Psoas muscle (tissue), 8 donors: ENCODE measurements at regions of chr20 and their contacts with region 1.

Region 1: GRCh38 chr20:37790900-37791299 is 97.1 kb downstream of the CTNNBL1 start:
- DNase-seq: no peak
- ATAC-seq: no peak
- H3K4me3 ChIP-seq: no peak overlapping the region
- H3K27ac ChIP-seq: no peak overlapping the region
- H3K4me1 ChIP-seq: no peaks in the 10 kb centered on the region
- H3K27me3 ChIP-seq: no peaks in the 10 kb centered on the region
- CTCF ChIP-seq: no peak

Region 2: GRCh38 chr20:37575884-37576283 is 215.0 kb before region 1 on chr20:
- intact Hi-C with region 1: no loop called
- DNase-seq: no peak
- ATAC-seq: no peak
- H3K4me3 ChIP-seq: no peak overlapping the region
- H3K27ac ChIP-seq: no peak overlapping the region
- H3K4me1 ChIP-seq: no peaks in the 10 kb centered on the region
- H3K27me3 ChIP-seq: peaks cover 0 to 12% (median 0%) of the 10 kb centered on the region in 3 donors
- CTCF ChIP-seq: no peak

Region 3: DNA sequence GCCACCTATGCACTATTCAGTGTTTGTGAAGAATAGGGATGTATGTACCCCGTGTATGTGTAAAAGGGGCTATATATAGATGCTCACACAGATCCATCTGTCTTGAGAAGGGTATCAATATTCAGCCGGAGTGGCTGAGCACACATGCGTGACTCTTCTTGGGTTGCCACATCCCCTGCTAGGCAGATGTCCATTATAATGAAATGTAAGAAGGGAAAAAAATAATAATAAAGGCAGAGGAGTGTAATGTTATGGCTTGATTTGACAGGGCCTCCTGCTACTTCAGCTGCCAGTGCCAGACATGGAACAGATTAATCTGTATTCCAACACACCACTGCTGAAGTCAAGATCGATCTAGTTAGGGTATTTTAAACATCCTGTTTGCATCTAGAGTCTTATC is 37.8 kb after region 1 on chr20:
- intact Hi-C with region 1: loop called in 1 of 2 experiments (anchors 5 kb)
- DNase-seq: no peak
- ATAC-seq: peak; percentile 46 to 82 (median 62)
- H3K4me3 ChIP-seq: no peak overlapping the region
- H3K27ac ChIP-seq: no peak overlapping the region
- H3K4me1 ChIP-seq: peaks cover 12% of the 10 kb centered on the region
- H3K27me3 ChIP-seq: no peaks in the 10 kb centered on the region
- CTCF ChIP-seq: no peak

Region 4: GRCh38 chr20:38007526-38007925 is 216.6 kb after region 1 on chr20:
- intact Hi-C with region 1: no loop called
- DNase-seq: no peak
- ATAC-seq: no peak
- H3K4me3 ChIP-seq: no peak overlapping the region
- H3K27ac ChIP-seq: no peak overlapping the region
- H3K4me1 ChIP-seq: peaks cover 6% of the 10 kb centered on the region
- H3K27me3 ChIP-seq: no peaks in the 10 kb centered on the region
- CTCF ChIP-seq: no peak